CD8-positive, alpha-beta T cell (primary cell): ENCODE measurements at regions of chr10 and their contacts with region 1.

Region 1: GRCh38 chr10:90977162-90977854 is 56.4 kb upstream of the ANKRD1 start:
- DNase-seq: no peak
- ATAC-seq: no peak
- H3K4me3 ChIP-seq: no peak overlapping the region
- H3K4me3 Mint-ChIP-seq: no peak overlapping the region
- H3K27ac ChIP-seq: no peak overlapping the region
- H3K27ac Mint-ChIP-seq: no peak overlapping the region
- H3K4me1 ChIP-seq: no peaks in the 10 kb centered on the region
- H3K4me1 Mint-ChIP-seq: no peaks in the 10 kb centered on the region
- H3K27me3 ChIP-seq: no peaks in the 10 kb centered on the region
- H3K27me3 Mint-ChIP-seq: peaks cover 2% of the 10 kb centered on the region
- CTCF ChIP-seq: no peak

Region 2: GRCh38 chr10:90958781-90959180 is 18.5 kb before region 1 on chr10:
- CTCF ChIA-PET with region 1: no interaction called
- POLR2A ChIA-PET with region 1: no interaction called
- intact Hi-C with region 1: loop called in 1 of 2 experiments (anchors 1 kb)
- DNase-seq: no peak
- ATAC-seq: no peak
- H3K4me3 ChIP-seq: no peak overlapping the region
- H3K4me3 Mint-ChIP-seq: no peak overlapping the region
- H3K27ac ChIP-seq: no peak overlapping the region
- H3K27ac Mint-ChIP-seq: no peak overlapping the region
- H3K4me1 ChIP-seq: no peaks in the 10 kb centered on the region
- H3K4me1 Mint-ChIP-seq: no peaks in the 10 kb centered on the region
- H3K27me3 ChIP-seq: no peaks in the 10 kb centered on the region
- H3K27me3 Mint-ChIP-seq: no peaks in the 10 kb centered on the region
- CTCF ChIP-seq: no peak